GM12878 (cell line): ENCODE measurements at regions of chr11 and their contacts with region 1.

Region 1: GRCh38 chr11:7098235-7098832 is 9.5 kb downstream of the RBMXL2 start:
- DNase-seq: peak; percentile 40
- ATAC-seq: peak; percentile 95
- H3K4me3 ChIP-seq: no peak overlapping the region
- H3K27ac ChIP-seq: no peak overlapping the region
- H3K4me1 ChIP-seq: no peaks in the 10 kb centered on the region
- H3K27me3 ChIP-seq: no peaks in the 10 kb centered on the region
- CTCF ChIP-seq: peak; percentile 58 to 74 (median 63); a peak in 5 of 6 replicates
- EP300 ChIP-seq: no peak
- POLR2A ChIP-seq: no peak
- RAD21 ChIP-seq: peak; percentile 94

Region 2: DNA sequence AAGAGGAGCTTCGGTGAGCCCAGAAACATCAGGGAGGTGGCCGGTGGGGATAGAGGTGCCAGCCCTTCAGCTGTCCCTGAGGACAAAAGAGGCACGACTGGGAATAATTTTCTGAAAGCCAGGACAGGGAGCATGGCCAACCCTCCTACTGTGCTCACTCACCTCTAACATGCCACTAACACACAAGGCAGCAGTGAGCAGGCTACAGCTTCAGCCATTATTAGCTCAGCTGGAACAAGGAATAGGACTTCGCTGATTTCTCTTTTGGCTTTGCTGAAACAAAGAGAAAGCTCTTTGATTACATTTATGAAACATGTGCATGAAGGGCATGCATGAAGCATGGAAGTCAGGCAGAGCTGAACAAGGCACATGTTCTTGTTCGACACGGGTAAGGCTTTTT is 265.0 kb before region 1 on chr11:
- CTCF ChIA-PET with region 1: no interaction called
- POLR2A ChIA-PET with region 1: no interaction called
- RAD21 ChIA-PET with region 1: no interaction called
- SMC1A ChIA-PET with region 1: no interaction called
- in situ Hi-C with region 1: no loop called
- intact Hi-C with region 1: no loop called
- DNase-seq: no peak
- ATAC-seq: no peak
- H3K4me3 ChIP-seq: no peak overlapping the region
- H3K27ac ChIP-seq: no peak overlapping the region
- H3K4me1 ChIP-seq: no peaks in the 10 kb centered on the region
- H3K27me3 ChIP-seq: no peaks in the 10 kb centered on the region
- CTCF ChIP-seq: no peak
- EP300 ChIP-seq: no peak
- POLR2A ChIP-seq: no peak
- RAD21 ChIP-seq: no peak

Region 3: GRCh38 chr11:7278314-7278917 is 180.1 kb after region 1 on chr11:
- CTCF ChIA-PET with region 1: interaction called, 6 read pairs
- POLR2A ChIA-PET with region 1: no interaction called
- RAD21 ChIA-PET with region 1: interaction called, 13 read pairs
- SMC1A ChIA-PET with region 1: no interaction called
- in situ Hi-C with region 1: no loop called
- intact Hi-C with region 1: loop called (anchors 5 kb)
- DNase-seq: no peak
- ATAC-seq: peak; percentile 90
- H3K4me3 ChIP-seq: no peak overlapping the region
- H3K27ac ChIP-seq: no peak overlapping the region
- H3K4me1 ChIP-seq: no peaks in the 10 kb centered on the region
- H3K27me3 ChIP-seq: no peaks in the 10 kb centered on the region
- CTCF ChIP-seq: peak; percentile 44 to 60 (median 49)
- EP300 ChIP-seq: no peak
- POLR2A ChIP-seq: no peak
- RAD21 ChIP-seq: peak; percentile 35; the same call in 1 of the 2 replicates

Region 4: GRCh38 chr11:7442588-7443215 is 344.4 kb after region 1 on chr11:
- CTCF ChIA-PET with region 1: interaction called, 20 read pairs
- POLR2A ChIA-PET with region 1: no interaction called
- RAD21 ChIA-PET with region 1: interaction called, 3 read pairs
- SMC1A ChIA-PET with region 1: interaction called, 14 read pairs
- in situ Hi-C with region 1: loop called (anchors 5 kb)
- intact Hi-C with region 1: loop called (anchors 1 kb)
- DNase-seq: peak; percentile 30
- ATAC-seq: peak; percentile 98
- H3K4me3 ChIP-seq: no peak overlapping the region
- H3K27ac ChIP-seq: no peak overlapping the region
- H3K4me1 ChIP-seq: no peaks in the 10 kb centered on the region
- H3K27me3 ChIP-seq: no peaks in the 10 kb centered on the region
- CTCF ChIP-seq: peak; percentile 86 to 92 (median 90)
- EP300 ChIP-seq: no peak
- POLR2A ChIP-seq: no peak
- RAD21 ChIP-seq: peak; percentile 98

Region 5: GRCh38 chr11:7688238-7688826 is 590.0 kb after region 1 on chr11:
- CTCF ChIA-PET with region 1: interaction called, 26 read pairs
- POLR2A ChIA-PET with region 1: no interaction called
- RAD21 ChIA-PET with region 1: interaction called, 5 read pairs
- SMC1A ChIA-PET with region 1: interaction called, 7 read pairs
- in situ Hi-C with region 1: no loop called
- intact Hi-C with region 1: loop called (anchors 1 kb)
- DNase-seq: no peak
- ATAC-seq: peak; percentile 84
- H3K4me3 ChIP-seq: no peak overlapping the region
- H3K27ac ChIP-seq: no peak overlapping the region
- H3K4me1 ChIP-seq: no peaks in the 10 kb centered on the region
- H3K27me3 ChIP-seq: peaks cover 0 to 2% of the 10 kb centered on the region in 2 experiments; a peak in 2 of 4 replicates
- CTCF ChIP-seq: peak; percentile 76 to 80 (median 79)
- EP300 ChIP-seq: no peak
- POLR2A ChIP-seq: no peak
- RAD21 ChIP-seq: peak; percentile 80

Region 6: DNA sequence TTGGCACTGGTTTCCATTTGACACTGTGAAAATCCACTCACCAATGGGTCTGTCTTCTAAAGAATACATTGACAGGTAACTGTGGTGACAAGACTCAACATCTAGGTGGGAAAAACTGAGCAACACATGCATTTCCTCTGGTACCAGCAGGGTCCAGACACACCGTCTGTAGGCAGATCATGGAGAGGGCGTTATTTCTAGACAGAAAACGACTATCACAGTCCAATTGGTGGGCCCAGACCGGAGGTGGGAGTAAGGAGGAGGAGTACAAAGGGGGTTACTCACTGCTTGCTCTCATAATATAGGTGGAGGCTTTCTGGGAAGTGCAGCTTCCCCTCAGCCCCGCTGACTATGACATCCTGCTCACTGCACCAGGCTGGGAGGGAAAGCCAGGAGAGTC is 598.1 kb after region 1 on chr11:
- CTCF ChIA-PET with region 1: interaction called, 26 read pairs
- POLR2A ChIA-PET with region 1: no interaction called
- RAD21 ChIA-PET with region 1: interaction called, 6 read pairs
- SMC1A ChIA-PET with region 1: interaction called, 13 read pairs
- in situ Hi-C with region 1: loop called (anchors 5 kb)
- intact Hi-C with region 1: no loop called
- DNase-seq: no peak
- ATAC-seq: peak; percentile 28
- H3K4me3 ChIP-seq: no peak overlapping the region
- H3K27ac ChIP-seq: no peak overlapping the region
- H3K4me1 ChIP-seq: no peaks in the 10 kb centered on the region
- H3K27me3 ChIP-seq: peaks cover 0 to 5% of the 10 kb centered on the region in 2 experiments; a peak in 2 of 4 replicates
- CTCF ChIP-seq: no peak
- EP300 ChIP-seq: no peak
- POLR2A ChIP-seq: no peak
- RAD21 ChIP-seq: no peak